HEK293 (cell line): ENCODE measurements at regions of chr12 and their contacts with region 1.

Region 1: GRCh38 chr12:69719382-69720316 is 19.0 kb upstream of the RAB3IP start:
- H3K4me3 ChIP-seq: no peak overlapping the region
- H3K27ac ChIP-seq: no peak overlapping the region
- H3K4me1 ChIP-seq: no peaks in the 10 kb centered on the region
- CTCF ChIP-seq: no peak

Region 2: GRCh38 chr12:69738351-69739286 is 19.0 kb after region 1 on chr12 and contains the start of gene RAB3IP:
- CTCF ChIA-PET with region 1: no interaction called
- POLR2A ChIA-PET with region 1: no interaction called
- H3K4me3 ChIP-seq: peak within 1 kb of the TSS; percentile 92
- H3K27ac ChIP-seq: peak within 1 kb of the TSS; percentile 87
- H3K4me1 ChIP-seq: peaks cover 2% of the 10 kb centered on the region; the same call in 1 of the 2 replicates
- CTCF ChIP-seq: no peak; the same call in 1 of the 2 replicates

Region 3: DNA sequence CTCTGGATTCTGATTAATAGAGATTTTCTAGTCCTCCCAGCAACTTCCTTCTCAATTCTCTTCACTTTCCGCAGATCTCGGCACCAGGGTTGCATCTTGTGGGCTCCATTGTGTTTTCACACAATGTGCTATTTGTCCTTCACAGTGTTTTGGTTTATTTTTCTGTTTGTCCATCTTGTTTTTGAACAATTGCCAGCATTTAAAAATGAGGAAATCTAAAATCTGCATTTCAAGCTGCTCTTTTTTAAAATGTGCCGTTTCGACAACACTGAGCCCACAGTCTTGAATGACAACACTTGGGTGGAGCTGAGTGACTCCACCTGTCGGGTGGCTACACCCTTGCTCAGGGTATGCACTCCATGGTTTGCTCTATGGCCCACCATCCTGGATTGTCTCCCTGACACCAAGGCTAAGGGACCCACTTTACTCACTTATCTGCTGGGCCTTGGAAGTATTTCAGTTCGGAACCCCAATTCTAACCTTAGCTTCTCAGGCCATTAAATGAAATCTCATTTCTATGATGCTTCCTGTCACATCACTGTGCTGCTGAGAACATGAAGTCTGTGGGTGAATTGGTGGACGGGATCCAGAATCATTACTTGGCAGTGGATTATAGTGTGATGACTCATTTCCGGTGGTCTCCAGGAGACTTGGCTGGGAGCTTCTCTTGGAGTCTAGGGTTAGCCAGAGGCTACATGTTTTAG is 102.0 kb after region 1 on chr12:
- CTCF ChIA-PET with region 1: interaction called, 10 read pairs
- POLR2A ChIA-PET with region 1: no interaction called
- H3K4me3 ChIP-seq: peak overlapping the region; percentile 6
- H3K27ac ChIP-seq: no peak overlapping the region
- H3K4me1 ChIP-seq: peaks cover 8% of the 10 kb centered on the region
- CTCF ChIP-seq: no peak